ENCODE measurements at regions of chrX and their contacts with region 1.

Region 1: DNA sequence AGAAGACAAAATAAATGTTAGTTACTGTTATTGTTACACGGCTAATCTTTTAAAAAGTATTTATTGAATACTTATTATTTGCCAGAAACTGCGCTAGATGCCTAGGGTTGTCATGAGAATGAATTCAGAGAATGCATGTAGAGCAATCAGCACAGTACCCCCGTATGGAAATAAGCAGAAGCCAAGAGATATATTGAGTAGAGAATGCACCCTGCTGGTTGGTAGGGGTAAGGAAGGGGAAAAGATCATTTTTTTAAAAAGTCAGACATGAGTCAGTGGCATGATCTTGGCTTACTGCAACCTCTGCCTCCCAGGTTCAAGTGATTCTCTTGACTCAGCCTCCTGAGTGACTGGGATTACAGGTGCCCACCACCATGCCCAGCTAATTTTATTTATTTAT is 13.1 kb upstream of the DRP2 start:
- DNase-seq: no peak
- H3K4me3 ChIP-seq: no peak overlapping the region
- H3K27ac ChIP-seq: no peak overlapping the region
- H3K4me1 ChIP-seq: no peaks in the 10 kb centered on the region
- H3K27me3 ChIP-seq: no peaks in the 10 kb centered on the region
- CTCF ChIP-seq: no peak
- POLR2A ChIP-seq: no peak

Region 2: GRCh38 chrX:100895365-100896075 is 311.0 kb before region 1 on chrX:
- intact Hi-C with region 1: loop called (anchors 10 kb)
- DNase-seq: no peak
- H3K4me3 ChIP-seq: no peak overlapping the region
- H3K27ac ChIP-seq: no peak overlapping the region
- H3K4me1 ChIP-seq: no peaks in the 10 kb centered on the region
- H3K27me3 ChIP-seq: no peaks in the 10 kb centered on the region
- CTCF ChIP-seq: peak in 2 of 4 experiments; percentile 26 to 34
- POLR2A ChIP-seq: no peak

Region 3: DNA sequence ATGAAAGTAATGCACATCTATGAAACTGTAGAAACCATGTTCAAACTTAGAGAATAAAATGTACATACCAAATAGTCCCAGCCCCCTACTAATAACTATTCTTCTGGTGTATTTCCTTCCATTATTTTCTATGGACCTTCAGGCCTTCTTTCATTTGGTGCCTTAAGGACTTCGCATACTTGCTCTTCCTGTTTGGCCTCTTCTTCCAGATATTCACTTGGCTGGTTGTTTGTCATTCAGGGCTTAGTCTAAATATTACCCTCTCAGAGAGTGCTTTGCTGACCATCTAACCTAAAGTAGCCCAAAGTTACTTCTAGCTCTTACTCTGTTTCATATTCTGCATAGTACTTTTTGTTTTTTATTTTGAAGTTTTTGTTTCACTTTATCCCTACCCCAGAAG is 523.5 kb after region 1 on chrX:
- intact Hi-C with region 1: no loop called
- DNase-seq: peak; percentile 3
- H3K4me3 ChIP-seq: no peak overlapping the region
- H3K27ac ChIP-seq: no peak overlapping the region
- H3K4me1 ChIP-seq: no peaks in the 10 kb centered on the region
- H3K27me3 ChIP-seq: no peaks in the 10 kb centered on the region
- CTCF ChIP-seq: no peak
- POLR2A ChIP-seq: no peak

Measured in prostate gland (tissue), 2 donors.